ENCODE measurements at regions of chr9 and their contacts with region 1.

Region 1: DNA sequence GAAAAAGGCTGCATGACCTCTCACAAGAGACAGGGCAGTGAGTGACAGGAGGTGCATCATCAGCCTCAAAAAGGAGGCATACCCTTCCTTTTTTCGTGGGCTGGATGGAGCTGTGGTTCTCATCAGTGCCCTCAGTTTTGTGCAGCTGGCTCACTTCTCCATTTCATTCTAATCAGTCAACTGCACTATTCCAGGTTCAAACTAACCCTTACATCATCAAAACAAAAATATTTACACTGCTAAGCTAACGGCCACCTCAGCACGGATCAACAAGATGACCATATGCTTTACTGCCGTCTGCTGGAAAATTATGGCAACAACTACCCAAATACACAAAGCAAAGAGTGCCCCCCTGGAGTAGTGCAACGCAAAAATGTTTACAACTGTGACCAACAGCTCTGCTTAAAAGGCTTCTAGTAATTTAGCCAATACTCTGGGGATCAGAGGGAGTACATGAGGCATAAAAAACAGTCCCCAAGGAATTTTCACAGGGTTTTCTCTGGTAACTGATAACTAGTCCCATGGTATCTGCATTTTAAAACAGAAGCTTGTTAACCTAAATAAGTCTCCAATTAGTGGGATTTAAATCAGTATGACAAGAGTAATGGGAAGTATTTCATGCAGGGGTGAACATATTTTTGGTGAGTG is 10.8 kb downstream of the KCNV2 start:
- DNase-seq: peak; percentile 76
- H3K4me3 ChIP-seq: no peak overlapping the region
- H3K27ac ChIP-seq: no peak overlapping the region
- H3K4me1 ChIP-seq: no peaks in the 10 kb centered on the region
- H3K27me3 ChIP-seq: no peaks in the 10 kb centered on the region
- CTCF ChIP-seq: peak; percentile 65 to 69
- POLR2A ChIP-seq: no peak

Region 2: DNA sequence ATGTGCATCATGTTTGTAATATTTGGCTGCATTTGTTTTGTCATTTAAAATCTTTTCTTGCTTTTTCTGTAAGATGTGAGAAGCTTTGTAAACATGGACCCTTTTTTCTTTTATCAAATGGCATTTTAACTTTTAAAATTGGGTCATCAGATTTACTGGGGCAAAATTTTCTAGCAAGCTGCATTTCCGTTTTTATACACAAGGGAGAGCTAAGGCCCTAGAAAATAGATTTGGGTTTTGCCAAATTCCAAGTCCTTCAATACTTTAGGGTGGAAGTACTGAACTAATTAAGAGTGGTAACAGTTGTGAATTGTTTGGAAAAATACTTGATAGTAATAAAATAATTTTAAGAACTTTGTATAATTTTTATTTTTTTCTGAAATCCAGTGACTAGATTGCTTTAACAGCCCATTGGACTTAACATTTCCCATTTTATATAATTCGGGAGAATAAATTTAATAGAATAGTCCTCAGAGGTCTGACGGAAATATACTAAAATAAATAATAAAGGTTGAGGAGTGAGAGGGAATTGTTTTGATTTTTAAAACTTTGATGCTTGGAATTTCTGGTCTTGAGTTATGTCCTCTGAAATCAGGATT is 595.5 kb before region 1 on chr9:
- CTCF ChIA-PET with region 1: interaction called, 79 read pairs
- POLR2A ChIA-PET with region 1: no interaction called
- dilution Hi-C with region 1: no loop called
- intact Hi-C with region 1: loop called (anchors 1 kb)
- DNase-seq: peak; percentile 42
- H3K4me3 ChIP-seq: no peak overlapping the region
- H3K27ac ChIP-seq: no peak overlapping the region
- H3K4me1 ChIP-seq: peaks cover 15% of the 10 kb centered on the region
- H3K27me3 ChIP-seq: no peaks in the 10 kb centered on the region
- CTCF ChIP-seq: peak; percentile 40 to 48
- POLR2A ChIP-seq: no peak

Region 3: GRCh38 chr9:2241836-2242741 is 486.0 kb before region 1 on chr9:
- CTCF ChIA-PET with region 1: interaction called, 16 read pairs
- POLR2A ChIA-PET with region 1: no interaction called
- dilution Hi-C with region 1: no loop called
- intact Hi-C with region 1: loop called (anchors 5 kb)
- DNase-seq: peak; percentile 87
- H3K4me3 ChIP-seq: peak overlapping the region; percentile 31 to 67 (median 36)
- H3K27ac ChIP-seq: no peak overlapping the region
- H3K4me1 ChIP-seq: peaks cover 14% of the 10 kb centered on the region
- H3K27me3 ChIP-seq: peaks cover 0 to 2% of the 10 kb centered on the region in 2 experiments
- CTCF ChIP-seq: no peak
- POLR2A ChIP-seq: peak; percentile 77

Region 4: DNA sequence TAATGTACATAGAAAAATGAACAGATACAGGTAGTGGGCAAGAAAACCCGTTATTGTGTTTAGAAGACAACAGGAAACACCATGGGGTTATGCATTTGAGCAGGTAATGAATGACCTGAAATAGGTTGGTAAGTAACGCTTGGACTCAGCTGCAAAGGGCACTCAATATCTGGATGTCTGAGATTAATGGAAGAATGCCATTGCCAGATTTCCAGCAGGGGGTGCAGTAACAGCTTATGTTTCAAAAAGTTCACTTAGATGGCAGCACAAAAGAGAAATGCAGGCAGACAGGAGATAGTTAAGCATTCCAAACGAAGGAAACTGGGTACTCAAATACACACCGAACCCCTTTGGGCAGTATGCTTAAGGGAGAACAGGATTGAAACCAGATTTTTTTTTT is 392.0 kb before region 1 on chr9:
- CTCF ChIA-PET with region 1: interaction called, 28 read pairs
- POLR2A ChIA-PET with region 1: no interaction called
- dilution Hi-C with region 1: no loop called
- intact Hi-C with region 1: loop called (anchors 1 kb)
- DNase-seq: peak; percentile 8
- H3K4me3 ChIP-seq: no peak overlapping the region
- H3K27ac ChIP-seq: no peak overlapping the region
- H3K4me1 ChIP-seq: no peaks in the 10 kb centered on the region
- H3K27me3 ChIP-seq: no peaks in the 10 kb centered on the region
- CTCF ChIP-seq: peak in 1 of 2 donors; percentile 12
- POLR2A ChIP-seq: no peak

Region 5: GRCh38 chr9:2620919-2621679 is 107.0 kb before region 1 on chr9:
- CTCF ChIA-PET with region 1: interaction called, 22 read pairs
- POLR2A ChIA-PET with region 1: no interaction called
- dilution Hi-C with region 1: no loop called
- intact Hi-C with region 1: loop called (anchors 1 kb)
- DNase-seq: peak; percentile 58
- H3K4me3 ChIP-seq: peak overlapping the region; percentile 2 to 42 (median 42)
- H3K27ac ChIP-seq: no peak overlapping the region
- H3K4me1 ChIP-seq: peaks cover 13% of the 10 kb centered on the region
- H3K27me3 ChIP-seq: peaks cover 38 to 57% of the 10 kb centered on the region in 2 experiments
- CTCF ChIP-seq: no peak
- POLR2A ChIP-seq: no peak